Activated CD4-positive, alpha-beta memory T cell treated with anti-CD3 and anti-CD28 coated beads, Interleukin-2, amount 10 ng/mL, durations not matched to agents 7 days and 5 days (primary cell): ENCODE measurements at regions of chr10 and their contacts with region 1.

Region 1: GRCh38 chr10:43204943-43205671 is 61.8 kb downstream of the RASGEF1A start:
- DNase-seq: peak; percentile 73
- H3K4me3 Mint-ChIP-seq: no peak overlapping the region
- H3K27ac Mint-ChIP-seq: no peak overlapping the region
- H3K4me1 Mint-ChIP-seq: peaks cover 12% of the 10 kb centered on the region
- H3K27me3 Mint-ChIP-seq: no peaks in the 10 kb centered on the region

Region 2: DNA sequence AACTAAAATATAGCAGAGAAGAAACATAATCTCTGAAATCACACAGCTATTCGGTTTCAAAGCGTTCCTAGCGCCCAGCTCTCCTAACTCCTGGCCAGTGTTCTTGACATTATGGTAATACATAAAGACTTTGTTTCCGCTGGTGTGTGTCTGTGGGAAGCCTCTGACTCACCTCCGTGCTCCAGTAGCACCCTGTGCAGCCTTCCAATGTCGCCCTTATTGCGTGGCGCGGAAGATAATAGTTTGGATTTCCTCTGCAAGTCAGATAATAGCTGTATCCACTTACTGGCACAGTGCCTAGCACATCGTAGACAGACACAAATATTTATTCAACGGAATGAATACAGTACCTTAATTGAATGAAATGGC is 421.9 kb before region 1 on chr10:
- CTCF ChIA-PET with region 1: no interaction called
- POLR2A ChIA-PET with region 1: no interaction called
- DNase-seq: peak; percentile 31
- H3K4me3 Mint-ChIP-seq: peak overlapping the region; percentile 88
- H3K27ac Mint-ChIP-seq: peak overlapping the region; percentile 84
- H3K4me1 Mint-ChIP-seq: peaks cover 21% of the 10 kb centered on the region
- H3K27me3 Mint-ChIP-seq: peaks cover 1% of the 10 kb centered on the region

Region 3: GRCh38 chr10:43170491-43170890 is 34.6 kb before region 1 on chr10:
- CTCF ChIA-PET with region 1: interaction called, 11 read pairs
- POLR2A ChIA-PET with region 1: no interaction called
- DNase-seq: no peak
- H3K4me3 Mint-ChIP-seq: no peak overlapping the region
- H3K27ac Mint-ChIP-seq: no peak overlapping the region
- H3K4me1 Mint-ChIP-seq: peaks cover 37% of the 10 kb centered on the region
- H3K27me3 Mint-ChIP-seq: no peaks in the 10 kb centered on the region

Region 4: DNA sequence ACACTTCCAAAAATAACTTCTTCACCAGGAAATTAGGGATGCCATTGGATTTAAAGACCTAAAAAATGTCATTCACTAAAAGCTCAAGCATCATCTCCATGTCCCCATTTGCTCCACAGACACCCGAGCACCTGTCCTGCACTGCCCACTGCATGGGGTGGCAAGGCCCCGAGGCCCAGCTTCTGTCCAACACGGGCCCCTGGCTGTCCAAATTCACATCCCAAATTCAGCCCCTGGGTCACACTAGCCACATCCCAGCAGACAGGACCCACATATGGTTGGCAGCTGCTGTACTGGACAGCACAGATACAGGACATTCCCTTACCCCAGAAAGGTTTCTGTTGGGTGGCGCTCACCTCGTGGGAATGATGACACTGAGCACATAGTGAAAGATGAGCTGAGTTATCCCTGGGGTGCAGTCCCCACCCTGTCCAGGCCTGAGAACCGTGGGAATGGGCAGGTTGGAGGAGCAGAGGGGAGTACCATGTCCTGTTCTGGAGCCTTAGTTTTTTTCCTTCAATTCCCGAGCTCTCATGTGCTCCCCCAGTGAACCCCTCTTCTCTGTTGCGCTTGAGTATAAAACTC is 11.5 kb before region 1 on chr10:
- CTCF ChIA-PET with region 1: interaction called, 13 read pairs
- POLR2A ChIA-PET with region 1: interaction called, 11 read pairs
- DNase-seq: peak; percentile 12
- H3K4me3 Mint-ChIP-seq: no peak overlapping the region
- H3K27ac Mint-ChIP-seq: no peak overlapping the region
- H3K4me1 Mint-ChIP-seq: no peaks in the 10 kb centered on the region
- H3K27me3 Mint-ChIP-seq: no peaks in the 10 kb centered on the region

Region 5: GRCh38 chr10:43255634-43256431 is 50.7 kb after region 1 on chr10:
- CTCF ChIA-PET with region 1: interaction called, 15 read pairs
- POLR2A ChIA-PET with region 1: no interaction called
- DNase-seq: peak; percentile 60
- H3K4me3 Mint-ChIP-seq: no peak overlapping the region
- H3K27ac Mint-ChIP-seq: peak overlapping the region; percentile 35
- H3K4me1 Mint-ChIP-seq: peaks cover 6% of the 10 kb centered on the region
- H3K27me3 Mint-ChIP-seq: peaks cover 1% of the 10 kb centered on the region